ENCODE measurements at regions of chr12 and their contacts with region 1.

Region 1: DNA sequence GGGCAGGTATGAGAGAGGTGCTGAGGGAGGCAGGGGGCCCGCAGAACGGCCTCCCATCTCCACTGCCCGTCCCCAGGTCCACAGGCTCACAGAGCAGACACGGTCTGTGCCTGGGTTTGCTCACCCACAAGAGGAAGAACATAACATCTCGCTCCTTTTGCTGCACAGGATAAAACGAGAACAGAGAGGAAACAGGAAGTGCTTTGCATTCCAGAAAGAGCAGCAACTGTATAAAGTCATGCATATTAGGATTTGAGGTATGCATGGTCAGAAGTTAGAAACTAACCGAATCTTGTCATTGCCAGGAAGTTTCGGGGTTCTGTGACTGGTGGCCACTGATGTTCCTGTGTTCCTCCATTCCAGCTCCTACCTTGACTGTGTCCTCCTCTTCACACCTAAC is 25.0 kb downstream of the NTF3 start:
- DNase-seq: no peak
- ATAC-seq: peak in 7 of 8 donors; percentile 28 to 70 (median 52)
- H3K4me3 ChIP-seq: peak overlapping the region in 1 of 10 donors; percentile 12
- H3K27ac ChIP-seq: peak overlapping the region in 8 of 10 donors; percentile 12 to 80 (median 52)
- H3K4me1 ChIP-seq: peaks cover 3 to 31% (median 13%) of the 10 kb centered on the region in 9 donors
- H3K27me3 ChIP-seq: peaks cover 0 to 12% (median 0%) of the 10 kb centered on the region in 7 donors
- CTCF ChIP-seq: no peak

Region 2: GRCh38 chr12:5506821-5507231 is 49.9 kb after region 1 on chr12:
- intact Hi-C with region 1: loop called in 1 of 10 experiments (anchors 5 kb)
- DNase-seq: peak; percentile 48 to 69
- ATAC-seq: peak; percentile 48 to 90 (median 80)
- H3K4me3 ChIP-seq: no peak overlapping the region
- H3K27ac ChIP-seq: peak overlapping the region in 1 of 10 donors; percentile 10
- H3K4me1 ChIP-seq: peaks cover 0 to 38% (median 16%) of the 10 kb centered on the region in 9 donors
- H3K27me3 ChIP-seq: peaks cover 0 to 25% (median 5%) of the 10 kb centered on the region in 7 donors
- CTCF ChIP-seq: no peak

Region 3: GRCh38 chr12:5546616-5547015 is 89.7 kb after region 1 on chr12:
- intact Hi-C with region 1: no loop called
- DNase-seq: no peak
- ATAC-seq: no peak
- H3K4me3 ChIP-seq: no peak overlapping the region
- H3K27ac ChIP-seq: no peak overlapping the region
- H3K4me1 ChIP-seq: no peaks in the 10 kb centered on the region
- H3K27me3 ChIP-seq: peaks cover 0 to 13% (median 0%) of the 10 kb centered on the region in 7 donors
- CTCF ChIP-seq: no peak

Measured in heart right ventricle (tissue), 16 donors.